ENCODE measurements at regions of chr17 and their contacts with region 1.

Region 1: GRCh38 chr17:2837147-2837561 is 40.9 kb downstream of the RAP1GAP2 start:
- DNase-seq: peak; percentile 88
- ATAC-seq: peak; percentile 100
- H3K4me3 ChIP-seq: no peak overlapping the region
- H3K4me3 Mint-ChIP-seq: no peak overlapping the region
- H3K27ac ChIP-seq: no peak overlapping the region
- H3K27ac Mint-ChIP-seq: peak overlapping the region; percentile 68
- H3K4me1 ChIP-seq: peaks cover 8 to 9% of the 10 kb centered on the region in 2 donors
- H3K4me1 Mint-ChIP-seq: peaks cover 14% of the 10 kb centered on the region
- H3K27me3 ChIP-seq: peaks cover 0 to 41% (median 14%) of the 10 kb centered on the region in 4 experiments
- H3K27me3 Mint-ChIP-seq: peaks cover 25% of the 10 kb centered on the region
- CTCF ChIP-seq: peak; percentile 70

Region 2: DNA sequence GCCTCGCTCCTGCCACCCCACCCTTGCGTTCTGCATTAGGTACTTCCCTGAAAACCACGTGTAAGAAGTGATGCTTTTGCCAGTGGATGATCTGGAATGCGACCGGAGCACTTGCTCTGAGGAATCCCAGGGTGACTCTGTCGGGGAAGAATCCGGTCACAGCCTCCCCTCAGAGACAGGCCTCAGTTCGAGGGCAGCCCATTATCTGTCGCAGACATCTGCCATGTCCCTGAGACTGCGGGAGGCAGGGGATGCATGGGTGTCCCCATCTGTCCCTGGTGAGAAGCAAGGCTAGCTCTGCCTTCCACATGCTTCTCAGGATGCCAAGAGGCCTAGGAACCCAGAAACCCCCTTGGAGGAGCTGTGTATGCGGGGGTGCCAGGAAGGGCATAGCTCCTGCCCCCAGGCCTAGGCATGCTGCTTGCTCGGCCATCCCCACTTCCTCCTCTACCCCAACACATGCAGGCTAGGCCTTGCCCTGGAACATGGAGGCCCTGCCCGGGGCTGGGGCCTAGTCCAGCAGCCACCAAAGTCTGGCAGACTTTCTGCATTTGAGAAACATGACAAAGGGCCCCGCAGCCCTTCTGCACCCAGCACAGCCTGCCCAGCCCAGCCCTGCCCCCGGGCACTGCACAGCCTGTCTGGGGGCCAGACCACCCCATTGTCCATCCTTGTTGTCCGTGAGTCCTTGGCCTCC is 456.8 kb before region 1 on chr17:
- CTCF ChIA-PET with region 1: interaction called, 17 read pairs
- POLR2A ChIA-PET with region 1: no interaction called
- intact Hi-C with region 1: no loop called
- DNase-seq: no peak
- ATAC-seq: no peak
- H3K4me3 ChIP-seq: no peak overlapping the region
- H3K4me3 Mint-ChIP-seq: no peak overlapping the region
- H3K27ac ChIP-seq: no peak overlapping the region
- H3K27ac Mint-ChIP-seq: no peak overlapping the region
- H3K4me1 ChIP-seq: peaks cover 0 to 4% of the 10 kb centered on the region in 2 donors
- H3K4me1 Mint-ChIP-seq: no peaks in the 10 kb centered on the region
- H3K27me3 ChIP-seq: no peaks in the 10 kb centered on the region
- H3K27me3 Mint-ChIP-seq: no peaks in the 10 kb centered on the region
- CTCF ChIP-seq: no peak

Region 3: DNA sequence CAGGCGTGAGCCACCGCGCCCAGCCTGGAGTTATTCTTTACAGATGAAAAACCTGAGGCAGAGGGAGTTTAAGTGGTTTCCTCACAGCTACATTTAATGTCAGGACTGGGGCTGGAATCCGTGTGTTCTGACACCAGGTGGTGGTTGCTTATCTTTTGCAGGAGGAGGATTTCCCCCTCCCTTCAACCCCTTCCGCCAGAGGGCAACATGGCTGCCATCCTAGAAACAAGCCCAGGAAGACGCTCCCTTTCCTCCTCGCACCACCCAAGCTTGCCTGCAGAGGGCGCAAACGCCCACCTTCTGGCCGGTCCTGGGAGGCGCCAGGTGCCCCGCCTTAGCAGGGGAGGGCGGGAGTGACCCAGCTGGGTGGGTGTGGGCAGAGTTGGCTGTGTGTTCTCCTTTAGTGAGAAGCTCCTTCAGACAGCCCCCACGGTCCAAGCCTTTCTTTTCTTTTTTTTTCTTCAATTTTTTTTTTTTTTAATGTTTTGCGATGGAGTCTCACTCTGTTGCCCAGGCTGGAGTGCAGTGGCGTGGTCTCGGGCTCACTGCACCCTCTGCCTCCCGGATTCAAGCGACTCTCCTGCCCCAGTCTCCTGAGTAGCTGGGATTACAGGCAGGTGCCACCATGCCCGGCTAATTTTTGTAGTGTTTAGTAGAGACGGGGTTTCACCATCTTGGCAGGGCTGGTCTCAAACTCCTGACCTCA is 50.8 kb before region 1 on chr17:
- CTCF ChIA-PET with region 1: interaction called, 93 read pairs
- POLR2A ChIA-PET with region 1: interaction called, 11 read pairs
- intact Hi-C with region 1: loop called (anchors 1 kb)
- DNase-seq: peak; percentile 95
- ATAC-seq: peak; percentile 99
- H3K4me3 ChIP-seq: no peak overlapping the region
- H3K4me3 Mint-ChIP-seq: peak overlapping the region; percentile 44
- H3K27ac ChIP-seq: no peak overlapping the region
- H3K27ac Mint-ChIP-seq: peak overlapping the region; percentile 41
- H3K4me1 ChIP-seq: peaks cover 18 to 29% of the 10 kb centered on the region in 2 donors
- H3K4me1 Mint-ChIP-seq: peaks cover 19% of the 10 kb centered on the region
- H3K27me3 ChIP-seq: peaks cover 0 to 15% (median 4%) of the 10 kb centered on the region in 4 experiments
- H3K27me3 Mint-ChIP-seq: no peaks in the 10 kb centered on the region
- CTCF ChIP-seq: peak; percentile 89

Region 4: DNA sequence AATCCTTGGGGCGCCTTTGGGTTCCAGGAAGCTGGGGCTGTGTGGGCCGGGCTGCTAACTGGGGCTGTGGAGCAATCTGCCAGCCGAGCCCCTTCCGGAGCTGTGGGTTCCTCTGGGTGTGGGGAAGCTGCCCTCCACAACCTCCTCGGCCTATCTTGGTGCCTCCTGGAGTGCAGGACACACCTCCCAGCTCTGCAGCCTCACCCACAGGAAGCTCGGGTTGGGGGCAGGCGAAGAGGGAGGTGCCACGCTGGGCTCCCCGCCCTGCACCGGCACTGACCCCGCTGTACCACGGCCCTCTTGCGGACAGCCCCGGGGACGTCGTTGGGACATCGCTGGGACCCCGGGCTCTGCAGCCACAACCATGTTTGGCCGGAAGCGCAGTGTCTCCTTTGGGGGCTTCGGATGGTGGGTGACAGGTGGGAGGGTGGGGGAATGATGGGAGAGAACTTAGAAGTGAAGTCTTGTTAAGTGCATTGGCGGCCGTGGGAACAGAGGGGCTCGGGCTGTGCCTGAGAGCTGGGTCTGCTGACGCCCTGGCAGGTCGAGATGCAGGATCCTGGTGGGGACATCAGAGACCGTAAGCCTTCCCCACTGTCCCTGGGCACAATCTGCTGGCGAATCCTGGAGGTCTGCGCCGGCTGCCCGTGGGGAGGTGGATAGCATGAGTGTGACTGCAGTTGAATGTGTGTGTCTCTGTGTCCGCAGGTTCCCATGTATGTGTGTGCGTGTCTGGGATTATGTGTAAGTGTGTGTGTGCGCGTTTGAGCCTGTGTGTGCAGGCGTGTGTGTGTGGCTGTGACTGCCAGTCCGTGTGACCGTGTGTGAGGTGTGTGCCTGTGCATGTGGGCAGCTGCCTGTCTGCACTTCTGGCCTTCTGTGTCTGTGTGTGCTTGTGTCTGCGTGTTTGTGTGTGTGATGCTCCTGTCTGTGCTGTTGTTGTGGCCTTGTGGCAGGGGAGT is 40.7 kb before region 1 on chr17 and contains the start of gene RAP1GAP2:
- CTCF ChIA-PET with region 1: interaction called, 40 read pairs
- POLR2A ChIA-PET with region 1: interaction called, 5 read pairs
- intact Hi-C with region 1: no loop called
- DNase-seq: peak; percentile 65
- ATAC-seq: peak; percentile 78
- H3K4me3 ChIP-seq: peak within 1 kb of the TSS; percentile 43 to 78 (median 62)
- H3K4me3 Mint-ChIP-seq: peak within 1 kb of the TSS; percentile 96
- H3K27ac ChIP-seq: peak within 1 kb of the TSS; percentile 7 to 33
- H3K27ac Mint-ChIP-seq: peak within 1 kb of the TSS; percentile 91
- H3K4me1 ChIP-seq: peaks cover 56 to 75% of the 10 kb centered on the region in 2 donors
- H3K4me1 Mint-ChIP-seq: peaks cover 71% of the 10 kb centered on the region
- H3K27me3 ChIP-seq: no peaks in the 10 kb centered on the region
- H3K27me3 Mint-ChIP-seq: no peaks in the 10 kb centered on the region
- CTCF ChIP-seq: no peak
- total RNA-seq, gene RAP1GAP2: 13.4 and 14.9 TPM in 2 replicates

Region 5: DNA sequence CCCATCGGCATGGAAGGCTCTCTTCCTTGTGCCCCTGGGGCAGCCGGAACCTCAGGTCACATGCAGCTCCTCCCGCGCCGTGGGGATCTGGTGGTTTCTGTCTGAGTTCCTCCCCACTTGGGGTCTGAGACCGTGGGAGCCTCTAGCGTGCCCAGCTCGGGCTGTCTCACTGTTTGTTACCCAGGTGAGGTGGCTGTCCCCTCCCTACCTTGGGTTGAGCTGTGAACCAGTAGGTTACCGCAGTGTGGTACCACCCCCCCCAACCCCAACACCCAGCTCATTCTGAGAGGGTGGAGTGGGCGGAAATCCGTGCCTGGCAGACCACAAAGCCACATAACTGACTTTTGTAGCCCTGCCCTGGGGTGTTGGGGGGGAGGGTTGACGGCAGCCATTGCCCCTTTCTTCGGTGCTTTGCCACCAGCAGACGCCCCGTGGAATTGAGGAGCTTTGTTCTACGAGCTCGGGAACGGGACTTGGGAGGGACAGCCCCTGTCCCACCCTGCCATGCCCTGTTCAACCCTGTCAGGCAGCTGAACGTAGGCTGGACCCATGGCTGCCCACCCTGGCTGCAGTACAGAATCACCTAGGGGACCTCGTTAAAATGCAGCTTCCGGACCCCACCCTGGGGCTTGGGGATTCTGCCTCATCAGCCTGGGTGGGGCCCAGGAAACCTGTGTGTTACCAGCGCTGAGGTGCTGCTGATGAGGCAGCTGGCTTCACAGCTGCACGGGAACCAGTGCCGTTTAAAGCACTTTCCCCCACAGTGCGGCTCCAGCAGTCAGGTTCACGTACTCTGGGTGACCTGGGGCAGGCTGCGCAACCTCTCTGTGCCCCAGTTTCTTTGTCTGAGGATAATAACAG is 22.4 kb before region 1 on chr17:
- CTCF ChIA-PET with region 1: interaction called, 20 read pairs
- POLR2A ChIA-PET with region 1: interaction called, 7 read pairs
- intact Hi-C with region 1: loop called (anchors 2 kb)
- DNase-seq: peak; percentile 95
- ATAC-seq: peak; percentile 82
- H3K4me3 ChIP-seq: peak overlapping the region in 4 of 5 experiments; percentile 39 to 70 (median 57)
- H3K4me3 Mint-ChIP-seq: peak overlapping the region; percentile 75
- H3K27ac ChIP-seq: peak overlapping the region; percentile 69 to 79
- H3K27ac Mint-ChIP-seq: peak overlapping the region; percentile 93
- H3K4me1 ChIP-seq: peaks cover 24 to 55% of the 10 kb centered on the region in 2 donors
- H3K4me1 Mint-ChIP-seq: peaks cover 44% of the 10 kb centered on the region
- H3K27me3 ChIP-seq: no peaks in the 10 kb centered on the region
- H3K27me3 Mint-ChIP-seq: no peaks in the 10 kb centered on the region
- CTCF ChIP-seq: no peak

Region 6: GRCh38 chr17:2958573-2959320 is 121.6 kb after region 1 on chr17:
- CTCF ChIA-PET with region 1: no interaction called
- POLR2A ChIA-PET with region 1: interaction called, 17 read pairs
- intact Hi-C with region 1: no loop called
- DNase-seq: no peak
- ATAC-seq: no peak
- H3K4me3 ChIP-seq: no peak overlapping the region
- H3K4me3 Mint-ChIP-seq: no peak overlapping the region
- H3K27ac ChIP-seq: no peak overlapping the region
- H3K27ac Mint-ChIP-seq: no peak overlapping the region
- H3K4me1 ChIP-seq: peaks cover 11 to 12% of the 10 kb centered on the region in 2 donors
- H3K4me1 Mint-ChIP-seq: peaks cover 15% of the 10 kb centered on the region
- H3K27me3 ChIP-seq: peaks cover 0 to 9% (median 0%) of the 10 kb centered on the region in 4 experiments
- H3K27me3 Mint-ChIP-seq: peaks cover 8% of the 10 kb centered on the region
- CTCF ChIP-seq: no peak